ENCODE measurements at regions of chr17 and their contacts with region 1.

Region 1: GRCh38 chr17:45385331-45385997 is 47.2 kb downstream of the ARHGAP27 start:
- DNase-seq: no peak
- H3K4me3 ChIP-seq: no peak overlapping the region
- CTCF ChIP-seq: peak; percentile 96

Region 2: GRCh38 chr17:45190503-45191255 is 194.8 kb before region 1 on chr17:
- CTCF ChIA-PET with region 1: no interaction called
- POLR2A ChIA-PET with region 1: no interaction called
- DNase-seq: no peak
- H3K4me3 ChIP-seq: no peak overlapping the region
- CTCF ChIP-seq: no peak

Region 3: DNA sequence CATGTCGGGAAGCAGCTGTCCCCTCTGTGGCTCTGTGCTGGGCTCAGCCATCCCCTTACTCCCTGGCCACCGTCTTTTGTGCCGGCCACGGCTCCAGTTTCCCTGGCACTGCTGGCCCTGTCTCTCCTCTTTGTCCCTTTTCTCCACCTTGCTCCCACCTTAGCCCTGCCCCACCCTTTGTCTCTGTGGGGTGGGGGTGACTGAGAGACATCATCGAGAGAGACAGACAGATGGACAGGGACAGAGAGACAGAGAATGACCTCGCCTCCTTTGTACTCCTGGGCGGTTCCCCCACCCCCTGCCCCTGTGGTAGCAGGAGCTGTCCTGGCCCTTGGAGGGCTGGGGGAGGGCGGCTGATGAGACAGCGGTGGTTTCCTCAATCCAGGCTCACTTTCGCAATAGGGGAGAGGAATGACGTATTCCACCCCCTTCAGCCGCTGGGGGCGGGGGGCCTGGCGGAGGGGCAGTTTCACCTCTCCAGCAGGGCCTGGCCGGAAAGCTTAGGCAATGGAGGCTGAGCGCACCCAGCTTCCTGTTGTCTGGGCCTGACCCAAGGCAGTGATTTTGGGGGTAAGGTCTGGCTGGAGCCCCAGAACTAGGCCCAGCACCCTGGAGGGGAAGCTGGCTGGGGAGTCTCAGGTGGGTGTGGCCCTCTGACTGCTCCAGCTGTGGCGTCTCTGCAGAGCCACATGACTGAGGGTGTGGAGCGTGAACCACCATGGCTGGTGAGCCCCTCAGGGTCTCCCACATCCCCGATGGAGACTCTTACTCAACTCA is 156.5 kb before region 1 on chr17:
- CTCF ChIA-PET with region 1: interaction called, 20 read pairs
- POLR2A ChIA-PET with region 1: no interaction called
- DNase-seq: peak; percentile 54
- H3K4me3 ChIP-seq: no peak overlapping the region
- CTCF ChIP-seq: no peak

Region 4: DNA sequence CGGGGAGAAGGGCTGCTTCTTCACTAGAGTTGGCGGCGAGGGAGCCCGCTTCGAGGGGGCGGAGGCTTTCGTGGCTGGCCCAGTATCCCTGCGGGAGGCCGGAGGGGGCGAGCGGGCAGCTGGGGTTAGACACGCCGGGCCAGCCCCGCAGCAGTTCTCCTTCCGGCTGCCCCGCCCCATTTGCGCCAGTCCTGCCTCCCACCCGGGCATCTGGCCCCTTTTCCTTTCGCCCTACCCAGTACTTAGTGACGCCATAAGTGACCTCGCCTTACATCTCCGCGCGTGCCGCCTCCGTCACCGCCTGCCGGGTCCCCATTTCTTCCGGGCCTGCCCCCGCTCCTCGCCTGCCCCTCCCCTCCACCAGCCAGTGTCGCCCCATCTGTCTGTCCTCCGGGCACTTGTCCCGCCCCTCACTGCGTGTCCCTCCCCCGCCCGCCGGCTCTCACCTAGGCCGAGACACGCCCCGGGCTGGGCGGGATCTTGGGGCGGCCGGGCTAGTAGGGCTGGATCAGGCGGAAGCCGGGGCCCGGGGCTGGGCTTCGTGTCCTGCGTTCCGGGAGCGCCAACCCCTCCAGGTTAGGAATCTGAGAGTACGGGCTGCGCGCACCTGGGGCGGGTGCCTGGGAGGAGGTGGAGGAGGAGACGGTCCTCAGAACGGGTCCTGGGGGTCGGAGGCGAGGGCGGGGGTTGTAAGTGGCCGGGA is 137.9 kb before region 1 on chr17:
- CTCF ChIA-PET with region 1: interaction called, 13 read pairs
- POLR2A ChIA-PET with region 1: no interaction called
- DNase-seq: no peak
- H3K4me3 ChIP-seq: peak overlapping the region; percentile 56
- CTCF ChIP-seq: no peak

Region 5: GRCh38 chr17:45311760-45312476 is 73.5 kb before region 1 on chr17:
- CTCF ChIA-PET with region 1: interaction called, 32 read pairs
- POLR2A ChIA-PET with region 1: no interaction called
- DNase-seq: no peak
- H3K4me3 ChIP-seq: no peak overlapping the region
- CTCF ChIP-seq: no peak

Region 6: GRCh38 chr17:45371414-45372327 is 13.8 kb before region 1 on chr17:
- CTCF ChIA-PET with region 1: interaction called, 119 read pairs
- POLR2A ChIA-PET with region 1: no interaction called
- DNase-seq: peak; percentile 94
- H3K4me3 ChIP-seq: peak overlapping the region; percentile 18; the same call in 1 of the 2 replicates
- CTCF ChIP-seq: peak; percentile 22

Region 7: GRCh38 chr17:45784743-45785479 is 399.4 kb after region 1 on chr17:
- CTCF ChIA-PET with region 1: no interaction called
- POLR2A ChIA-PET with region 1: no interaction called
- DNase-seq: no peak
- H3K4me3 ChIP-seq: peak overlapping the region; percentile 8; the same call in 1 of the 2 replicates
- CTCF ChIP-seq: no peak

Measured in AG04449 (cell line).